CD4-positive, alpha-beta memory T cell (primary cell): ENCODE measurements at regions of chr17 and their contacts with region 1.

Region 1: GRCh38 chr17:3845621-3846441 is at the start of gene NCBP3:
- DNase-seq: peak; percentile 85 to 93 (median 90)
- H3K4me3 ChIP-seq: peak within 1 kb of the TSS; percentile 38 to 85
- H3K4me3 Mint-ChIP-seq: peak within 1 kb of the TSS; percentile 91 to 96 (median 94)
- H3K27ac ChIP-seq: peak within 1 kb of the TSS; percentile 84
- H3K27ac Mint-ChIP-seq: peak within 1 kb of the TSS; percentile 87 to 94 (median 89)
- H3K4me1 ChIP-seq: peaks cover 30% of the 10 kb centered on the region
- H3K4me1 Mint-ChIP-seq: peaks cover 12 to 35% (median 24%) of the 10 kb centered on the region in 4 donors
- H3K27me3 ChIP-seq: no peaks in the 10 kb centered on the region
- H3K27me3 Mint-ChIP-seq: no peaks in the 10 kb centered on the region
- total RNA-seq, gene NCBP3: 48.5 to 66.7 TPM

Region 2: GRCh38 chr17:3048767-3049471 is 796.9 kb before region 1 on chr17:
- CTCF ChIA-PET with region 1: interaction called, 3 read pairs
- POLR2A ChIA-PET with region 1: no interaction called
- intact Hi-C with region 1: loop called (anchors 5 kb)
- DNase-seq: peak; percentile 88 to 95 (median 93)
- H3K4me3 ChIP-seq: peak overlapping the region; percentile 66 to 94
- H3K4me3 Mint-ChIP-seq: peak overlapping the region; percentile 89 to 96 (median 94)
- H3K27ac ChIP-seq: peak overlapping the region; percentile 48
- H3K27ac Mint-ChIP-seq: peak overlapping the region; percentile 76 to 93 (median 91)
- H3K4me1 ChIP-seq: peaks cover 15% of the 10 kb centered on the region
- H3K4me1 Mint-ChIP-seq: peaks cover 0 to 14% (median 6%) of the 10 kb centered on the region in 4 donors
- H3K27me3 ChIP-seq: no peaks in the 10 kb centered on the region
- H3K27me3 Mint-ChIP-seq: no peaks in the 10 kb centered on the region

Region 3: GRCh38 chr17:3474212-3474611 is 371.6 kb before region 1 on chr17:
- CTCF ChIA-PET with region 1: no interaction called
- POLR2A ChIA-PET with region 1: no interaction called
- intact Hi-C with region 1: no loop called
- DNase-seq: no peak
- H3K4me3 ChIP-seq: no peak overlapping the region
- H3K4me3 Mint-ChIP-seq: no peak overlapping the region
- H3K27ac ChIP-seq: no peak overlapping the region
- H3K27ac Mint-ChIP-seq: no peak overlapping the region
- H3K4me1 ChIP-seq: no peaks in the 10 kb centered on the region
- H3K4me1 Mint-ChIP-seq: peaks cover 0 to 7% (median 3%) of the 10 kb centered on the region in 4 donors
- H3K27me3 ChIP-seq: no peaks in the 10 kb centered on the region
- H3K27me3 Mint-ChIP-seq: peaks cover 8 to 10% of the 10 kb centered on the region in 2 donors

Region 4: GRCh38 chr17:3683054-3683511 is 162.7 kb before region 1 on chr17:
- CTCF ChIA-PET with region 1: interaction called, 3 read pairs
- POLR2A ChIA-PET with region 1: no interaction called
- intact Hi-C with region 1: loop called (anchors 5 kb)
- DNase-seq: peak in 4 of 5 donors; percentile 55 to 62 (median 58)
- H3K4me3 ChIP-seq: no peak overlapping the region
- H3K4me3 Mint-ChIP-seq: peak overlapping the region in 1 of 8 donors; percentile 21
- H3K27ac ChIP-seq: no peak overlapping the region
- H3K27ac Mint-ChIP-seq: peak overlapping the region in 2 of 7 donors; percentile 65 to 70
- H3K4me1 ChIP-seq: peaks cover 9% of the 10 kb centered on the region
- H3K4me1 Mint-ChIP-seq: peaks cover 6 to 25% (median 7%) of the 10 kb centered on the region in 4 donors
- H3K27me3 ChIP-seq: no peaks in the 10 kb centered on the region
- H3K27me3 Mint-ChIP-seq: no peaks in the 10 kb centered on the region

Region 5: GRCh38 chr17:3893003-3893719 is 47.3 kb after region 1 on chr17 and contains the start of gene CAMKK1:
- CTCF ChIA-PET with region 1: interaction called, 12 read pairs
- POLR2A ChIA-PET with region 1: interaction called, 19 read pairs
- intact Hi-C with region 1: loop called (anchors 1 kb)
- DNase-seq: peak; percentile 85 to 91 (median 86)
- H3K4me3 ChIP-seq: peak within 1 kb of the TSS; percentile 36 to 65
- H3K4me3 Mint-ChIP-seq: peak within 1 kb of the TSS; percentile 84 to 89 (median 87)
- H3K27ac ChIP-seq: peak within 1 kb of the TSS; percentile 55
- H3K27ac Mint-ChIP-seq: peak within 1 kb of the TSS; percentile 87 to 96 (median 91)
- H3K4me1 ChIP-seq: peaks cover 21% of the 10 kb centered on the region
- H3K4me1 Mint-ChIP-seq: peaks cover 22 to 46% (median 26%) of the 10 kb centered on the region in 4 donors
- H3K27me3 ChIP-seq: no peaks in the 10 kb centered on the region
- H3K27me3 Mint-ChIP-seq: no peaks in the 10 kb centered on the region
- total RNA-seq, gene CAMKK1: 3.5 TPM

Region 6: GRCh38 chr17:3953542-3953941 is 107.7 kb after region 1 on chr17:
- CTCF ChIA-PET with region 1: no interaction called
- POLR2A ChIA-PET with region 1: no interaction called
- intact Hi-C with region 1: no loop called
- DNase-seq: no peak
- H3K4me3 ChIP-seq: no peak overlapping the region
- H3K4me3 Mint-ChIP-seq: no peak overlapping the region
- H3K27ac ChIP-seq: no peak overlapping the region
- H3K27ac Mint-ChIP-seq: peak overlapping the region in 1 of 7 donors; percentile 82
- H3K4me1 ChIP-seq: peaks cover 23% of the 10 kb centered on the region
- H3K4me1 Mint-ChIP-seq: peaks cover 14 to 33% (median 19%) of the 10 kb centered on the region in 4 donors
- H3K27me3 ChIP-seq: no peaks in the 10 kb centered on the region
- H3K27me3 Mint-ChIP-seq: no peaks in the 10 kb centered on the region

Region 7: DNA sequence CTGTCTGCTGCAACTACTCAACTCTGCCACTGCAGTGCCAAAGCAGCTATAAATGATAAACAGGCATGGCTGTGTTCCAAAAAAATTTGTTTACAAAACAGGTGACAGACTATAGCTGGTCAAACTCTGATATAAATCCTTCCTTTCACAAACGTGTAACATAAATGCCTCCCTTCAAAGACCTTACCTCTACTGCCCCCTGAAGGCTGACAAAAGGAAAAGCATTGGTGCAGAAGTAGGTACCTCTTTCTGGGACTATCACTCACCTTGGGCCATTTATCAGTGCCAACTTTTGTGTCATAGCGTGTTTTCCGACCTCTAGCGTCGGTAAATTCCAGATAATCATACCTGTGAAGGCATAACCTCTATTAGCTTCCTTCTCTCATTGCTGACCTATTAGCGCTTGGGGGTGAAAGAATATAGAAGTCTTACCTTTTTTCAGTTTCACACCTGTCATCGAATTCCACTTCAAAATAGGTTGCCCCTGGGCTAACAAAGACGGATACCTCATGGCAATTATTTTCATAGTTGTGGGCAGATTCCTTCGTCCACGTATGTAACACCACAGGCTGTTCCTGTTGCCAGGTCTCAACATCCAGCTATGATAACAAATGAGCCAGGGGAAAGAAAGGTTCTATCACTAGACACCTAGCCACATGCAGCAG is 229.1 kb after region 1 on chr17:
- CTCF ChIA-PET with region 1: interaction called, 19 read pairs
- POLR2A ChIA-PET with region 1: no interaction called
- intact Hi-C with region 1: no loop called
- DNase-seq: peak in 4 of 5 donors; percentile 45 to 53 (median 48)
- H3K4me3 ChIP-seq: no peak overlapping the region
- H3K4me3 Mint-ChIP-seq: no peak overlapping the region
- H3K27ac ChIP-seq: no peak overlapping the region
- H3K27ac Mint-ChIP-seq: peak overlapping the region in 4 of 7 donors; percentile 27 to 82 (median 50)
- H3K4me1 ChIP-seq: no peaks in the 10 kb centered on the region
- H3K4me1 Mint-ChIP-seq: peaks cover 0 to 6% (median 3%) of the 10 kb centered on the region in 4 donors
- H3K27me3 ChIP-seq: no peaks in the 10 kb centered on the region
- H3K27me3 Mint-ChIP-seq: no peaks in the 10 kb centered on the region